Right cardiac atrium (tissue), 5 donors: ENCODE measurements at regions of chr1 and their contacts with region 1.

Region 1: GRCh38 chr1:19799877-19800804 is at the start of gene TMCO4:
- DNase-seq: peak; percentile 53 to 82 (median 78)
- ATAC-seq: peak; percentile 79 to 83
- H3K4me3 ChIP-seq: peak within 1 kb of the TSS; percentile 64
- H3K27ac ChIP-seq: peak within 1 kb of the TSS; percentile 50
- H3K4me1 ChIP-seq: peaks cover 5% of the 10 kb centered on the region
- H3K27me3 ChIP-seq: no peaks in the 10 kb centered on the region
- total RNA-seq, gene TMCO4: 10.4 to 11.5 (median 11.0) TPM

Region 2: DNA sequence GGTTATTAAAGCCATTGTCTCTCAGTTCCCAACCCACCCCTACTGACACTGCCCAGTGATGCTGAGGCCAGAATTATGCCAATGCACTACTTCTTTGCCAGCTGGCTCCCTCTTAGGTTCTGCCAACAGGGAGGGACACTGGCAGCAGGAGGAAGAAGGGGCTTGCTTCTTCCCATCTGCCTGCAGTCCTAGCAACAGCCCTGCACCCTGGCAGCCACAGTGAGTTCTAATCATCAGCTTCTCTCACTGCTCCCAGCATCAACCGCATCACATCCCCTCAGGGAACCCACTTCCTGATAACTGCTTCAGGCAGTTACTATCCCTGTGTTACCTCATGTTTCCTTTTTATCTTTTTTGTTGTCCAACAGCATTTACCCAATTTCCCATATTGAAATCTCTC is 676.3 kb before region 1 on chr1:
- intact Hi-C with region 1: loop called in 1 of 4 experiments (anchors 10 kb)
- DNase-seq: peak in 1 of 3 donors; percentile 28
- ATAC-seq: peak in 1 of 2 donors; percentile 31
- H3K4me3 ChIP-seq: no peak overlapping the region
- H3K27ac ChIP-seq: no peak overlapping the region
- H3K4me1 ChIP-seq: no peaks in the 10 kb centered on the region
- H3K27me3 ChIP-seq: no peaks in the 10 kb centered on the region

Region 3: GRCh38 chr1:20087668-20088067 is 287.5 kb after region 1 on chr1:
- intact Hi-C with region 1: no loop called
- DNase-seq: no peak
- ATAC-seq: no peak
- H3K4me3 ChIP-seq: no peak overlapping the region
- H3K27ac ChIP-seq: no peak overlapping the region
- H3K4me1 ChIP-seq: peaks cover 16% of the 10 kb centered on the region
- H3K27me3 ChIP-seq: no peaks in the 10 kb centered on the region